ENCODE measurements at regions of chr5 and their contacts with region 1.

Region 1: GRCh38 chr5:10353241-10354047 is at the start of gene MARCHF6:
- DNase-seq: peak; percentile 87 to 100
- H3K4me3 ChIP-seq: peak within 1 kb of the TSS; percentile 85
- H3K27ac ChIP-seq: peak within 1 kb of the TSS; percentile 93
- H3K4me1 ChIP-seq: peaks cover 18% of the 10 kb centered on the region
- H3K27me3 ChIP-seq: no peaks in the 10 kb centered on the region
- CTCF ChIP-seq: no peak
- total RNA-seq, gene MARCHF6: 283 and 364 TPM in 2 replicates

Region 2: DNA sequence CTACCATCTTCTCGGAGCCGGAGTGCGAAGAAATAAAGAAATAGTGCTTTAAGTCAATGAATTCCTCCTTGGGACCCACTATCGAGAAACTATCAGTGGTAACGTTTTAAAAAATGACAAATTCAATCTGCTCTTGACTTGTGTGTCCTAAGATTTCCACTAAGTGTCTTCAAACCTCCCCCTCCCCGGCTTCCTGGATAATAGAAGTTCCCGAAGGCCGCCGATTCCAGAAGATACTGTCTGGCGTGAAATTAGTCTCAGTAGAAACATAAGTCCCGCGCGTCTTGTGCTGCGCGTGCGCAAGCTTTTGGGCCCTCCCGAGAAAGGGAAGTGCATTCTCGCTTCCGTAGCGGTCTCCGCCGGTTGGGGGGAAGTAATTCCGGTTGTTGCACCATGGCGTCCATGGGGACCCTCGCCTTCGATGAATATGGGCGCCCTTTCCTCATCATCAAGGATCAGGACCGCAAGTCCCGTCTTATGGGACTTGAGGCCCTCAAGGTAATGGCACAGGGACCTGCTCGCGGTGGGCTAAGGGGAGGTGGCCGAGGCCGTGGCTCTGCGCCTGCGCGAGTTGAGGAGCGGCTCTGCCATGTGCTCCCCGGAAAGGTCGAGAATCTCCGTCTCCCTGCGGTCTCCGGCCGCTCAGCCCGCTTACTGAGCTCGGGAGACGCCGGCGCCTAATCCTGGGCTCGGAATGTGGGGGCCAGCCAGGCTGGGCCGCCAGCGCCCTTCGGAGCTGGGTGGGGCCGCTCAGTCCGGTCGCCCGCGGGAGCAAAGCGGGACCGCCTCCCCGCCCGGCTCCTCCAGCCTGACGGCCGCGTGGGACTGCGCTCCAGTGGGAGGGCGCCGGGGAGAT is 103.3 kb before region 1 on chr5 and contains the start of gene CCT5:
- CTCF ChIA-PET with region 1: no interaction called
- POLR2A ChIA-PET with region 1: no interaction called
- intact Hi-C with region 1: loop called (anchors 1 kb)
- DNase-seq: peak; percentile 97 to 98
- H3K4me3 ChIP-seq: peak within 1 kb of the TSS; percentile 100
- H3K27ac ChIP-seq: peak within 1 kb of the TSS; percentile 91
- H3K4me1 ChIP-seq: peaks cover 17% of the 10 kb centered on the region
- H3K27me3 ChIP-seq: no peaks in the 10 kb centered on the region
- CTCF ChIP-seq: no peak
- total RNA-seq, gene CCT5: 658 and 831 TPM in 2 replicates

Region 3: GRCh38 chr5:10262121-10262774 is 91.2 kb before region 1 on chr5:
- CTCF ChIA-PET with region 1: no interaction called
- POLR2A ChIA-PET with region 1: interaction called, 11 read pairs
- intact Hi-C with region 1: no loop called
- DNase-seq: no peak
- H3K4me3 ChIP-seq: no peak overlapping the region
- H3K27ac ChIP-seq: no peak overlapping the region
- H3K4me1 ChIP-seq: peaks cover 18% of the 10 kb centered on the region
- H3K27me3 ChIP-seq: no peaks in the 10 kb centered on the region
- CTCF ChIP-seq: no peak

Region 4: GRCh38 chr5:10275991-10276390 is 77.5 kb before region 1 on chr5:
- CTCF ChIA-PET with region 1: no interaction called
- POLR2A ChIA-PET with region 1: no interaction called
- intact Hi-C with region 1: no loop called
- DNase-seq: no peak
- H3K4me3 ChIP-seq: no peak overlapping the region
- H3K27ac ChIP-seq: no peak overlapping the region
- H3K4me1 ChIP-seq: no peaks in the 10 kb centered on the region
- H3K27me3 ChIP-seq: no peaks in the 10 kb centered on the region
- CTCF ChIP-seq: no peak

Region 5: DNA sequence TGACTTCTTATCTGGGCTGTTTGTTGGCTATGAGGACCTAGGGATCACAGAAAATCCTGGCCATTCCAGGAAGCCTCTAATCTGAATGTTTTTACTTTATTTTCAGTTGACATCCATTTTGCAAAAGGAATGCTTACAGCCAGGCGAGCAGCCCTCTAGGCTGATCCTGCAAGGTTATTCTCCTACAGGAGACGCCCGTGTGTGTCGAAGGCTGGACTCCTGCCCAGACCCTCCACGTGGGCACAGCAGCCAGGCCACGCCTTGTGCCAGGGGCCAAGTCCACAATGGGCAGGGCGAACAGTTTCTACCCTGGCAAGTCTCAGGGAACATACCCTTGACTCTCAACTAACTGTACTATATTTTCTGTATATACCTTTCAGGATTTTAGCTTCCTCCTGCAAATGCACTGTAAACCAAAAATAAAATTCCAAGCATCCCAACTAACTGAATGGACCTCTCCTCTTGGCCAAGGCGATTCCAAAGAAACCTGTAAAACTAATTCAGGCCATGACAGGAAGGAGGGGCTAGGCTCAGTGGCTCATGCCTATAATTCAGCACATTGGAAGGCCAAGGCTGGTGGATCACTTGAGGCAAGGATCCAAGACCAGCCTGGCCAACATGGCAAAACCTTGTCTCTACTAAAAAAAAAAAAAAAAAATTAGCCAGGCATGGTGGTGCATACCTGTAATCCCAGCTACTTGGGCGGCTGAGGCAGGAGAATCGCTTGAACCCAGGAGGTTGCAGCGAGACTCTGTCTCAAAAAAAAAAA is 51.4 kb before region 1 on chr5:
- CTCF ChIA-PET with region 1: interaction called, 10 read pairs
- POLR2A ChIA-PET with region 1: interaction called, 22 read pairs
- intact Hi-C with region 1: no loop called
- DNase-seq: peak; percentile 75 to 98
- H3K4me3 ChIP-seq: no peak overlapping the region
- H3K27ac ChIP-seq: peak overlapping the region; percentile 13
- H3K4me1 ChIP-seq: peaks cover 40% of the 10 kb centered on the region
- H3K27me3 ChIP-seq: no peaks in the 10 kb centered on the region
- CTCF ChIP-seq: no peak

Region 6: DNA sequence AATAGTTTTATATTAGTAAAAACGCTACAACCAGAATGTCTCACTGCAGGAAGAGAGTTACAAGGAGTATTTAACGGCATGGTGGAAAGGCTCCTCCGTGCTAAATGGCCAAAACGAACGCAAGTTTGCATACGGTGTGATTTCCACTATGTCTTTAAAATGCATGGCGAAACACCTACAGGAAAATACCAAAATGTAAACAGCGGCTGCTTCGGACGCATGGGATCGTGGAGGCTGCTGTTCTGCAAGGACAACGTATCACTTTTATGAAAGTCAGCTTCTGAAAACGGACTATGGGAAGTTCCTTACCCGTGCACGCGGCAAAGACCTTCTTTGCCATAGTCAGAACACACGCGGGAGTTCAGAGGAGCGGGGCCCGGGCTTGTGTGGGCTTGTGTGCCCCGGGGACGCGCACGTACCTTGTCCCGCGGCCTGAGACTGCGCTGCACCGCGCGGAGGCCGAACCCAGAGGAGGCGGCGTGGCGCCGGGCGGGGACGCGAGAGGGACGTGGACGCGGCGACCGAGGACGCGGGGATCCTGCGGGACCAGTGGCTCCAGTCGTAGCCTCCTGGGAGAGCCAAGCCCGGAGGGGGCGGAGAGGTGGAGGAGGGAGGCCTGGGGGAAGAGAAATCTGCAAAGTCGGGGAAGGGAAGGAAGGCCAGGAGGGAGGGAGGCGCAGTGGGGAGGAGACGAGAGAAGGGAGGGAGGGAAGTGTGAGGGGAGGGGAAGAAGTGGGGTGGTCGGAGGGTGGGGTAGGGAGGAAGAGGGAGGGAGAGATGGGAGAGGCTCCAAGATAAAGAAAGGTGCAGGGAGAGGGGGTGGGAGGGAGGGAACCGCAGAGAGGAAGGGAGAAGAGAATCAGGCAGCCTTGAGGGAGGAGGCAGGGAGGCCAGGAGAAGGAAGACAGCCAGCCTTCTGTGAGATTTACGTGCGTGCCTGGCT is 46.0 kb before region 1 on chr5 and contains the start of gene CMBL:
- CTCF ChIA-PET with region 1: no interaction called
- POLR2A ChIA-PET with region 1: interaction called, 22 read pairs
- intact Hi-C with region 1: loop called (anchors 1 kb)
- DNase-seq: peak; percentile 56 to 94
- H3K4me3 ChIP-seq: peak within 1 kb of the TSS; percentile 79
- H3K27ac ChIP-seq: peak within 1 kb of the TSS; percentile 79
- H3K4me1 ChIP-seq: peaks cover 44% of the 10 kb centered on the region
- H3K27me3 ChIP-seq: no peaks in the 10 kb centered on the region
- CTCF ChIP-seq: no peak
- total RNA-seq, gene CMBL: 286 and 294 TPM in 2 replicates

Region 7: GRCh38 chr5:10364186-10364683 is 10.8 kb after region 1 on chr5:
- CTCF ChIA-PET with region 1: interaction called, 7 read pairs
- POLR2A ChIA-PET with region 1: interaction called, 10 read pairs
- intact Hi-C with region 1: loop called (anchors 2 kb)
- DNase-seq: peak in 1 of 2 experiments; percentile 23
- H3K4me3 ChIP-seq: no peak overlapping the region
- H3K27ac ChIP-seq: no peak overlapping the region
- H3K4me1 ChIP-seq: 0 out of 2 replicates have a peak, but pooled peaks cover 19% of the 10 kb centered on the region
- H3K27me3 ChIP-seq: no peaks in the 10 kb centered on the region
- CTCF ChIP-seq: peak; percentile 61

Region 8: DNA sequence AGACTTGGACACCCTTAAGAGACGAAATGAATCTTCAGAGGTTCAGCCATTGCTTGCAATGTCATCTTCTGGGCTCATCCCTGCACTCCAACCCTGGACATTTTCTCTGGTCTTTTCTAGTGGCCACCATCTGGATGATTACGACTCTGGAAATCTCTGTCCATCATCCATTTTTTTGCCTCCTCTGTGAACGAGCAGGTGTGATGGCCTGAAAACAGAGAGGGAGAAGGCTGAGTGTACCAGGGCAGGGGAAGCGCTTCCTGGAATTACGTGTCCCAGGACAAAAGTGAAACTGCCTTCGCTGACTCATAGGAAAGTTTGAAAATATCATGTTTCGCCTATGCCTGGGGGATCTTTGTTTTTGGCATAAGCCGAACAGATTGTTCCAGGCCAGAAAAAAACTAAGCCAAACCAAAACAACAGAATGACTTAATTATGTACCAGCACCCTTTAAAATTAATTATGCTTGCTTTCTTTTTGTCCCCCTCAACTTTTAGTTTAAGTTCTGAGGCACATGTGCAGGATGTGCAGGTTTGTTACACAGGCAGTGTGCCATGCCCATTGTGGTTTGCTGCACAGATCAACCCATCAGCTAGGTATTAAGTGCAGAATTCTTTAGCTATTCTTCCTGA is 242.3 kb after region 1 on chr5:
- CTCF ChIA-PET with region 1: no interaction called
- POLR2A ChIA-PET with region 1: no interaction called
- intact Hi-C with region 1: loop called (anchors 5 kb)
- DNase-seq: peak; percentile 89 to 93
- H3K4me3 ChIP-seq: 0 out of 2 replicates have a peak overlapping the region, but pooled peaks have one; percentile 5
- H3K27ac ChIP-seq: peak overlapping the region; percentile 83
- H3K4me1 ChIP-seq: peaks cover 56% of the 10 kb centered on the region
- H3K27me3 ChIP-seq: no peaks in the 10 kb centered on the region
- CTCF ChIP-seq: no peak